B cell (primary cell): ENCODE measurements at regions of chr21 and their contacts with region 1.

Region 1: DNA sequence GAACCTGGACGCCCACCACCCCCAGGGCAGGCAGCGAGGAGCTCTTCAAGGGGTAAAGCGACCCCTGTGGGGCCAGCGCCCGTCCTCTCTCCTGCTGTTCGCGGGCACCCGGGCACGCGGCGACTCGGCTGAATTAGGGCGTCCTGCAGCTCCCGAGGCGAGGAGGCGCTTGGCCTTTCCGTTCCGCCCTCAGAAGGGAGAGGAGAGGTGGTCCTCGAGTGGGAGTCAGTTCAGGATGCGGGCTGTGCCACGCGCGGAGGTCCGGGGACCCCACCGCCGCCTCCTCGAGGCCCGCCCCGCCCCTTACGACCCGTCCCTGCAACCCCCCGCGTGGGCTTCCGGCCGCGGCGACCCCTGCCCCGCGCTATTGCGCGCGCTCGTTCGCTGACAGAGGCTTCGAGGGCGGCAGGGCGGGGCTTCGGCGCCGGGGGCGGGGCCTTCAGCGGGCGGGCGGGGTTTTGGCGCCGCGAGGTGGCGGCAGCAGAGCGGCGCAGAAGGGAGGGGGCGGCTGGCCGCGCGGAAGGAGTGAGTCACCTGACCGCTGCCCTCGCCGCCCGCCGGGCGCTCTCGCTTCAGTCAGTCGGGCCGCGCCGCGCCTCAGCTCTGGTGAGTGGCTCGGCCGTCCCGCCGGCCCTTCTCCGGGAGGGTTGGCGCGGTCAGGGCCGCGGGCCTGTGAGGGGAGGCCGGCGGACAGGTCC is at the start of gene BACH1:
- DNase-seq: peak; percentile 92
- ATAC-seq: peak; percentile 53
- H3K4me3 ChIP-seq: peak within 1 kb of the TSS; percentile 69 to 99 (median 73)
- H3K4me3 Mint-ChIP-seq: peak within 1 kb of the TSS; percentile 97
- H3K27ac ChIP-seq: peak within 1 kb of the TSS; percentile 87 to 89
- H3K27ac Mint-ChIP-seq: peak within 1 kb of the TSS; percentile 97
- H3K4me1 ChIP-seq: peaks cover 59 to 62% of the 10 kb centered on the region in 2 donors
- H3K4me1 Mint-ChIP-seq: peaks cover 69% of the 10 kb centered on the region
- H3K27me3 ChIP-seq: no peaks in the 10 kb centered on the region
- H3K27me3 Mint-ChIP-seq: no peaks in the 10 kb centered on the region
- CTCF ChIP-seq: peak; percentile 46
- total RNA-seq, gene BACH1: 221 and 238 TPM in 2 replicates

Region 2: GRCh38 chr21:28992526-28993292 is 305.8 kb before region 1 on chr21 and contains the start of gene LTN1:
- CTCF ChIA-PET with region 1: no interaction called
- POLR2A ChIA-PET with region 1: interaction called, 3 read pairs
- intact Hi-C with region 1: loop called (anchors 10 kb)
- DNase-seq: peak; percentile 99
- ATAC-seq: peak; percentile 94
- H3K4me3 ChIP-seq: peak within 1 kb of the TSS; percentile 61 to 95 (median 83)
- H3K4me3 Mint-ChIP-seq: peak within 1 kb of the TSS; percentile 92
- H3K27ac ChIP-seq: peak within 1 kb of the TSS; percentile 88 to 93
- H3K27ac Mint-ChIP-seq: peak within 1 kb of the TSS; percentile 97
- H3K4me1 ChIP-seq: peaks cover 18 to 20% of the 10 kb centered on the region in 2 donors
- H3K4me1 Mint-ChIP-seq: peaks cover 25% of the 10 kb centered on the region
- H3K27me3 ChIP-seq: no peaks in the 10 kb centered on the region
- H3K27me3 Mint-ChIP-seq: no peaks in the 10 kb centered on the region
- CTCF ChIP-seq: no peak
- total RNA-seq, gene LTN1: 30.1 and 32.6 TPM in 2 replicates

Region 3: DNA sequence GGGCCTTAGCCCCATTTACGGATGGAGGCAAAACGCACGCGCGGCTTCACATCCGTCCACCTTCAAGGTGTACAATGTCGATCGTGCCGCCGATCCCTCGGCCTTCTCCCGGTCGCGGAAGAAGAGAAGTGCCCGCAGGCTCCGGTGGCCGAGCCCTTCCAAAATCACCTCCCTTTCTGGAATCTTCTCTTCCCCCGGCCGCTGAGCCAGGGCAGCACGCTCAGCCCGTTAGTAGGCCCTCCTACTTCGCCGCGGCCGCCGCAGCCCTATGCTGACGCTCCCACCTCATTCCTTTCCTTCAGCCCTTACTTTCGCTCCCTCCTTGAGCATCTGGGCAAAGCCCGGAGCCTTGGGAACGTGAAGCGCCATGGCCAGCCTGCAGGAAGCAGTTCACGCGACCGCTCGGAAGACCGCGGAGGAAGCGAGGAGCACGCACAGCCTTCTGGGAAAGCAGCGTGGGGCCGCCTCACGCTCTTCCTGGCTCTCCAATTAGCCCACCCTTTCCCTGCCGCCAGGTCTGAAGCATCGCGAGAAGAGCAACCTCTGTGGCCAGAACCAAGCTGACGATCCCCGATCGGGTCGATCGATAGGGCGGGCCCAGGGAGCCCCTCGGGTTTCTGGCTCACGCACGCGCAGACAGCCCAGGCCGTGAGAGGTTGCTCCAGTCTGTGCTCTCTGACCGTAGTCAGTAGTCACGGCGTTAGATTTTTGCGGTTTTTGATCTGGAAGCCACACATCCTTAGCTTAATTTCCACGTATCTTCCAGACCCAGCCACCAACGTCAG is 225.1 kb before region 1 on chr21 and contains the start of gene CCT8:
- CTCF ChIA-PET with region 1: interaction called, 9 read pairs
- POLR2A ChIA-PET with region 1: interaction called, 7 read pairs
- intact Hi-C with region 1: loop called (anchors 1 kb)
- DNase-seq: peak; percentile 99
- ATAC-seq: peak; percentile 91
- H3K4me3 ChIP-seq: peak within 1 kb of the TSS; percentile 72 to 99 (median 98)
- H3K4me3 Mint-ChIP-seq: peak within 1 kb of the TSS; percentile 99
- H3K27ac ChIP-seq: peak within 1 kb of the TSS; percentile 80 to 86
- H3K27ac Mint-ChIP-seq: peak within 1 kb of the TSS; percentile 96
- H3K4me1 ChIP-seq: peaks cover 27 to 33% of the 10 kb centered on the region in 2 donors
- H3K4me1 Mint-ChIP-seq: peaks cover 57% of the 10 kb centered on the region
- H3K27me3 ChIP-seq: no peaks in the 10 kb centered on the region
- H3K27me3 Mint-ChIP-seq: no peaks in the 10 kb centered on the region
- CTCF ChIP-seq: no peak
- total RNA-seq, gene CCT8: 92.8 and 100 TPM in 2 replicates

Region 4: GRCh38 chr21:29232601-29233546 is 65.6 kb before region 1 on chr21:
- CTCF ChIA-PET with region 1: interaction called, 28 read pairs
- POLR2A ChIA-PET with region 1: interaction called, 5 read pairs
- intact Hi-C with region 1: loop called (anchors 2 kb)
- DNase-seq: peak; percentile 74
- ATAC-seq: peak; percentile 28
- H3K4me3 ChIP-seq: peak overlapping the region in 1 of 5 experiments; percentile 8
- H3K4me3 Mint-ChIP-seq: peak overlapping the region; percentile 71
- H3K27ac ChIP-seq: peak overlapping the region; percentile 60 to 81
- H3K27ac Mint-ChIP-seq: peak overlapping the region; percentile 83
- H3K4me1 ChIP-seq: peaks cover 43 to 47% of the 10 kb centered on the region in 2 donors
- H3K4me1 Mint-ChIP-seq: peaks cover 65% of the 10 kb centered on the region
- H3K27me3 ChIP-seq: no peaks in the 10 kb centered on the region
- H3K27me3 Mint-ChIP-seq: no peaks in the 10 kb centered on the region
- CTCF ChIP-seq: peak; percentile 50

Region 5: DNA sequence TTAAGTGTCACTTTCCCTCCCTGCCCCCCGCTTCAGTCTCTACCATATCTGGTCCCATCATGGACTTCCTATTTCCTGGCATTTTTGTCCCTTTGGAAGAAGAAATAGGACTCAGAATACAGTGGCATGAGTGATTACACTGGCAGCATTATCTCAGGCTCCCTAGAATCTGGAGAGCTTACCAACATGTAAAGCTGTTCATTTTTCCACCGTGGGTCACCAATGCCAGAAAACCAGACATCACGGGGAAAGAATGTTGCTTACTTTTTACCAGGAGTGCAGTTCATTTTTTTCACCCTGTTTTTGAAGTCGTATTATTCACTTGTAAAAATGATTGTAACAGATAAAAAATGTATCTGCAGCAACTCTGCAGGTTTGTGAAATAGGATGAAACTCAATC is 45.0 kb after region 1 on chr21:
- CTCF ChIA-PET with region 1: interaction called, 7 read pairs
- POLR2A ChIA-PET with region 1: no interaction called
- intact Hi-C with region 1: loop called (anchors 1 kb)
- DNase-seq: no peak
- ATAC-seq: no peak
- H3K4me3 ChIP-seq: no peak overlapping the region
- H3K4me3 Mint-ChIP-seq: no peak overlapping the region
- H3K27ac ChIP-seq: no peak overlapping the region
- H3K27ac Mint-ChIP-seq: no peak overlapping the region
- H3K4me1 ChIP-seq: peaks cover 16 to 17% of the 10 kb centered on the region in 2 donors
- H3K4me1 Mint-ChIP-seq: peaks cover 33% of the 10 kb centered on the region
- H3K27me3 ChIP-seq: no peaks in the 10 kb centered on the region
- H3K27me3 Mint-ChIP-seq: no peaks in the 10 kb centered on the region
- CTCF ChIP-seq: no peak

Region 6: GRCh38 chr21:29386820-29387219 is 88.3 kb after region 1 on chr21:
- CTCF ChIA-PET with region 1: no interaction called
- POLR2A ChIA-PET with region 1: no interaction called
- intact Hi-C with region 1: no loop called
- DNase-seq: no peak
- ATAC-seq: no peak
- H3K4me3 ChIP-seq: no peak overlapping the region
- H3K4me3 Mint-ChIP-seq: no peak overlapping the region
- H3K27ac ChIP-seq: no peak overlapping the region
- H3K27ac Mint-ChIP-seq: no peak overlapping the region
- H3K4me1 ChIP-seq: no peaks in the 10 kb centered on the region
- H3K4me1 Mint-ChIP-seq: no peaks in the 10 kb centered on the region
- H3K27me3 ChIP-seq: no peaks in the 10 kb centered on the region
- H3K27me3 Mint-ChIP-seq: no peaks in the 10 kb centered on the region
- CTCF ChIP-seq: no peak